B cell (primary cell): ENCODE measurements at regions of chr11 and their contacts with region 1.

Region 1: GRCh38 chr11:62421996-62422395 is 3.2 kb downstream of the SCGB1A1 start:
- DNase-seq: no peak
- ATAC-seq: no peak
- H3K4me3 ChIP-seq: no peak overlapping the region
- H3K4me3 Mint-ChIP-seq: no peak overlapping the region
- H3K27ac ChIP-seq: no peak overlapping the region
- H3K27ac Mint-ChIP-seq: no peak overlapping the region
- H3K4me1 ChIP-seq: peaks cover 4 to 7% of the 10 kb centered on the region in 2 donors
- H3K4me1 Mint-ChIP-seq: peaks cover 3% of the 10 kb centered on the region
- H3K27me3 ChIP-seq: peaks cover 0 to 2% (median 0%) of the 10 kb centered on the region in 4 experiments
- H3K27me3 Mint-ChIP-seq: peaks cover 11% of the 10 kb centered on the region
- CTCF ChIP-seq: no peak

Region 2: GRCh38 chr11:61803889-61804647 is 617.9 kb before region 1 on chr11:
- CTCF ChIA-PET with region 1: no interaction called
- POLR2A ChIA-PET with region 1: no interaction called
- intact Hi-C with region 1: no loop called
- DNase-seq: no peak
- ATAC-seq: no peak
- H3K4me3 ChIP-seq: no peak overlapping the region
- H3K4me3 Mint-ChIP-seq: no peak overlapping the region
- H3K27ac ChIP-seq: no peak overlapping the region
- H3K27ac Mint-ChIP-seq: no peak overlapping the region
- H3K4me1 ChIP-seq: no peaks in the 10 kb centered on the region
- H3K4me1 Mint-ChIP-seq: no peaks in the 10 kb centered on the region
- H3K27me3 ChIP-seq: no peaks in the 10 kb centered on the region
- H3K27me3 Mint-ChIP-seq: no peaks in the 10 kb centered on the region
- CTCF ChIP-seq: no peak

Region 3: DNA sequence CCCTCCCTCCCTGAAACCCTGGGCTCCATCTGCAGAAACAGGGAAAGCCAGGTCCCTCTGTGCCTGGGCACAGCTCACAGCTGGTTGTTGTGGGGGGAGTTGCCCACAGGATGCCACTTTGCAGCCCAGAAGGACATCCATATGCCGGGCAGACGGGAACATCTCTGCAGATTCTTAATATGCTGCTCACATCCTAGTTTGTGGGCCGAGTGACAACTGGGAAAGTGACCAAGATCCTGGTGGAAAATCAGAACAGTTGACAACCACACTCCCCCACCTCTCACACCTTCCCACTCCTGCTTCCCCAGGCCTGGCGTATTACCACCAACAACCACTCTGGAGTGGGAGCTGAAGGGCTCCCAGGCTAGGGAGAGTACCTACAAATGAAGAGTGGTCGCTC is 10.5 kb before region 1 on chr11:
- CTCF ChIA-PET with region 1: interaction called, 12 read pairs
- POLR2A ChIA-PET with region 1: no interaction called
- intact Hi-C with region 1: no loop called
- DNase-seq: no peak
- ATAC-seq: no peak
- H3K4me3 ChIP-seq: no peak overlapping the region
- H3K4me3 Mint-ChIP-seq: no peak overlapping the region
- H3K27ac ChIP-seq: no peak overlapping the region
- H3K27ac Mint-ChIP-seq: no peak overlapping the region
- H3K4me1 ChIP-seq: no peaks in the 10 kb centered on the region
- H3K4me1 Mint-ChIP-seq: no peaks in the 10 kb centered on the region
- H3K27me3 ChIP-seq: no peaks in the 10 kb centered on the region
- H3K27me3 Mint-ChIP-seq: no peaks in the 10 kb centered on the region
- CTCF ChIP-seq: no peak

Region 4: DNA sequence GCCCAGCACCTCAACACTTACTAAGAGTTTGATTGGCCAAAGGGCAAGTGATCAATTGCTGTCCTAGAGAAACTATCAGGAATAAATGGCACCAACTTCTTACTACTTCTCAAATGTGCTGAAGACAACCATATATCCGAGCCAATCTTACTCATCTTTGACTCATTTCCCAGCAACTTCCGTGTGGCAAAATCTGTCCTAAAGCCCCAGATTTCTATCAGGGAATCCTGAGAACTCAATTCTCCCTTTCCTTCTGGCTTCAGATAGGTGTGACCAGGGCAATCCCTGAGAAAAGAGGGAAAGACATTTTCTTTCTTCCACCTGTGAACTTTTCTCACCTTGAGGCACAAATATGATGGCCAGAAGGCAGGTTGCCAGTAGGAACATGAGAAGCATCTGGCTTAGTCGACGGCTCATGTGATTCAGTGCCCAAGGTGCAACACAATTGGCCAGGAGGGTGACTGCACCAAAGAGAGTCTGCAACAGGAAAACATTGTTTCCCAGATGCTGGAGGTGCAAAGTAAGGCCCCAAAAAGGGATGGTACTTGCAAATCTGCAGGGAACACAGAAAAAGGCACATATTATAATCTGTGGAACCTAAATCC is 743.8 kb after region 1 on chr11:
- CTCF ChIA-PET with region 1: no interaction called
- POLR2A ChIA-PET with region 1: no interaction called
- intact Hi-C with region 1: no loop called
- DNase-seq: no peak
- ATAC-seq: no peak
- H3K4me3 ChIP-seq: no peak overlapping the region
- H3K4me3 Mint-ChIP-seq: no peak overlapping the region
- H3K27ac ChIP-seq: no peak overlapping the region
- H3K27ac Mint-ChIP-seq: no peak overlapping the region
- H3K4me1 ChIP-seq: no peaks in the 10 kb centered on the region
- H3K4me1 Mint-ChIP-seq: no peaks in the 10 kb centered on the region
- H3K27me3 ChIP-seq: peaks cover 0 to 20% (median 15%) of the 10 kb centered on the region in 4 experiments
- H3K27me3 Mint-ChIP-seq: peaks cover 54% of the 10 kb centered on the region
- CTCF ChIP-seq: no peak